ENCODE measurements at regions of chr1 and their contacts with region 1.

Region 1: GRCh38 chr1:16187748-16188401 is 24.6 kb downstream of the ARHGEF19 start:
- DNase-seq: peak; percentile 77 to 88 (median 84)
- ATAC-seq: peak; percentile 79
- H3K4me3 ChIP-seq: no peak overlapping the region
- H3K4me1 ChIP-seq: peaks cover 24% of the 10 kb centered on the region
- CTCF ChIP-seq: peak; percentile 87

Region 2: DNA sequence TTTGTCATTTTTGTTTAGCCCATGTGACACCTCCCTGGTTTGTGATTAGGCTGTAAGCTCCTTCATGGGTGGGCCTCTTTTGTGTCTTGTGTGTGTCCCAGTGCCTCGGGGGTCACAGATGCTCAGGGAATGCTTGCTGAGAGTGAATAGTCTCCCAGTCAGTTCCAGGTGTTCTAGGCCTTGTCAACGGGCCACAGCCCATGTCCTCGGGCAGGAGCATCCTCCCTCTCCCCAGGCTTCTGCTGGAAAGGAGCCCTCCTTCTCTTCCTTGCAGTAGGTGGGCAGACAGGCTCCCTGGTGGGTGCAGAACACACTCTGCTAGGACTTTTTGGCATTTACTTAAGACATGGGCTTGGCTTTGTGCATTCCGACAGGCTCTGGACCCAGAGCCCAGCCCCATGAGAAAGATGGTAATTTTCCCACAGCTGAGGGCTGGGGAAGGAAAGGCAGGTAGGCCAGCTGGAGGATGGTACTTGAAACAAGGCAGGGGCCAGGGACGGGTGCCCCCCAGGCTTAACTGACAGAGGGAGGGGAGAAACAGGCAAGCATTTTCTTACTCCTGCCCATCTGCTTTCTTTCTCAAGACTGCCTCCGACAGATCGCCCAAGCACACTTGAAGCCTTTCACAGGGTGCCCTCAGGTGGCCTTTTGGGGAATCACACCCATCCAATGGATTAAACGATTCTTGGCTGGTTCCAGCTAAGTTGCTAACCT is 56.2 kb after region 1 on chr1:
- intact Hi-C with region 1: loop called in 1 of 2 experiments (anchors 10 kb)
- DNase-seq: peak in 2 of 3 donors; percentile 79 to 89
- ATAC-seq: peak; percentile 79
- H3K4me3 ChIP-seq: no peak overlapping the region
- H3K4me1 ChIP-seq: peaks cover 18% of the 10 kb centered on the region
- CTCF ChIP-seq: peak; percentile 85

Region 3: GRCh38 chr1:16491056-16491962 is 303.4 kb after region 1 on chr1:
- intact Hi-C with region 1: no loop called
- DNase-seq: no peak
- ATAC-seq: no peak
- H3K4me3 ChIP-seq: no peak overlapping the region
- H3K4me1 ChIP-seq: no peaks in the 10 kb centered on the region
- CTCF ChIP-seq: no peak